OCI-LY7 (cell line): ENCODE measurements at regions of chr22 and their contacts with region 1.

Region 1: GRCh38 chr22:45640291-45640940 is 31.2 kb upstream of the ATXN10 start:
- DNase-seq: no peak
- H3K4me3 ChIP-seq: no peak overlapping the region
- H3K27ac ChIP-seq: no peak overlapping the region
- H3K4me1 ChIP-seq: no peaks in the 10 kb centered on the region
- CTCF ChIP-seq: no peak

Region 2: DNA sequence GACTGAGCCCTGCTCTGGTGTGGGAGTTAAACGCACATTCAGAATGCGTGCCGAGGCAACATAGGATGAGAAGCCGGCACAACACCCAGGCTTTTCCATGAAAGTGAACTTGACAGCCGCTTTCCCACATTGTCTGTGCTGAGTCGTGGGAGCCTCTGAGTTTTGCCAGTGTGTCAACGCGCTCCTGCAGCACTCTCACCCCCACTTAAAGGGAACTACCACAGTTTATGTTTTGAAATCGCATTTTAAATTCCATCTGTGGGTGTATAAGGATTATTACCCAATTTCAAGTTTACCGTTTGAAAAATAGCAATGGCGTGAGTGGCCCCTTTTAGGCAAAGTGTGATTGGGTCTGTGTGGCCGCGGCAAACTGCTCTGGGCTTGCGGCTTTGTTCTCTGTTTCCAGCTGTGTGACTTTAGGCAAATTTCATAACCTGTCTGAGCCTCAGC is 56.3 kb before region 1 on chr22:
- CTCF ChIA-PET with region 1: no interaction called
- POLR2A ChIA-PET with region 1: no interaction called
- intact Hi-C with region 1: loop called (anchors 5 kb)
- DNase-seq: peak; percentile 27
- H3K4me3 ChIP-seq: no peak overlapping the region
- H3K27ac ChIP-seq: no peak overlapping the region
- H3K4me1 ChIP-seq: peaks cover 20% of the 10 kb centered on the region
- CTCF ChIP-seq: no peak